Heart left ventricle (tissue), 16 donors: ENCODE measurements at regions of chr13 and their contacts with region 1.

Region 1: GRCh38 chr13:103188713-103189326 is 122.6 kb upstream of the SLC10A2 start:
- DNase-seq: no peak
- ATAC-seq: no peak
- H3K4me3 ChIP-seq: no peak overlapping the region
- H3K27ac ChIP-seq: no peak overlapping the region
- H3K4me1 ChIP-seq: peaks cover 0 to 6% (median 0%) of the 10 kb centered on the region in 12 donors
- H3K27me3 ChIP-seq: no peaks in the 10 kb centered on the region
- CTCF ChIP-seq: peak; percentile 18 to 64 (median 53)
- POLR2A ChIP-seq: no peak

Region 2: DNA sequence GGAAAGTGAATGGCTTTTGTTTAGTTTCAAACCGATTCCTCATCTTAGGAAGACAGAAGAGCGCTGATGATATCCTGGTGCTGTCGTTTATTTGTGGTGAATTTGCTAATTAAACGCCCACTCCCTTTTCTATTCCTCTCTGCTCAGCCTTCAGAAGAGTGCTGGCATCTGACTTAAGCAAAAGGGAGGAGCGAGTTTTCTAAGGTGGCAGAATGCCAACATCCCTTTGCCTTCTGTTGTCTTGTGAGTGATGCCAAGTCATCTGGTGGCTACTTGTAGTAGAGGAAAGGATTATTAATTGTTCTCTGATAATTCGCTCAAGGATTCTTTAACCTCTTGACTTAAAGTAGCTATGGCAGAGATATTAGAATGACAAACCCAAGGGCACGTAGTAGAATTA is 274.9 kb before region 1 on chr13:
- intact Hi-C with region 1: no loop called
- DNase-seq: no peak
- ATAC-seq: no peak
- H3K4me3 ChIP-seq: no peak overlapping the region
- H3K27ac ChIP-seq: no peak overlapping the region
- H3K4me1 ChIP-seq: peaks cover 0 to 11% (median 0%) of the 10 kb centered on the region in 12 donors
- H3K27me3 ChIP-seq: no peaks in the 10 kb centered on the region
- CTCF ChIP-seq: no peak
- POLR2A ChIP-seq: no peak

Region 3: GRCh38 chr13:103799028-103799427 is 610.2 kb after region 1 on chr13:
- intact Hi-C with region 1: loop called in 1 of 10 experiments (anchors 10 kb)
- DNase-seq: no peak
- ATAC-seq: no peak
- H3K4me3 ChIP-seq: no peak overlapping the region
- H3K27ac ChIP-seq: no peak overlapping the region
- H3K4me1 ChIP-seq: no peaks in the 10 kb centered on the region
- H3K27me3 ChIP-seq: no peaks in the 10 kb centered on the region
- CTCF ChIP-seq: no peak
- POLR2A ChIP-seq: no peak

Region 4: GRCh38 chr13:103876571-103876970 is 687.8 kb after region 1 on chr13:
- intact Hi-C with region 1: loop called in 1 of 10 experiments (anchors 10 kb)
- DNase-seq: no peak
- ATAC-seq: no peak
- H3K4me3 ChIP-seq: no peak overlapping the region
- H3K27ac ChIP-seq: no peak overlapping the region
- H3K4me1 ChIP-seq: no peaks in the 10 kb centered on the region
- H3K27me3 ChIP-seq: no peaks in the 10 kb centered on the region
- CTCF ChIP-seq: no peak
- POLR2A ChIP-seq: no peak